Activated B cell treated with CpG ODN at 0.5 μM for 24 hours (primary cell): ENCODE measurements at regions of chr16 and their contacts with region 1.

Region 1: DNA sequence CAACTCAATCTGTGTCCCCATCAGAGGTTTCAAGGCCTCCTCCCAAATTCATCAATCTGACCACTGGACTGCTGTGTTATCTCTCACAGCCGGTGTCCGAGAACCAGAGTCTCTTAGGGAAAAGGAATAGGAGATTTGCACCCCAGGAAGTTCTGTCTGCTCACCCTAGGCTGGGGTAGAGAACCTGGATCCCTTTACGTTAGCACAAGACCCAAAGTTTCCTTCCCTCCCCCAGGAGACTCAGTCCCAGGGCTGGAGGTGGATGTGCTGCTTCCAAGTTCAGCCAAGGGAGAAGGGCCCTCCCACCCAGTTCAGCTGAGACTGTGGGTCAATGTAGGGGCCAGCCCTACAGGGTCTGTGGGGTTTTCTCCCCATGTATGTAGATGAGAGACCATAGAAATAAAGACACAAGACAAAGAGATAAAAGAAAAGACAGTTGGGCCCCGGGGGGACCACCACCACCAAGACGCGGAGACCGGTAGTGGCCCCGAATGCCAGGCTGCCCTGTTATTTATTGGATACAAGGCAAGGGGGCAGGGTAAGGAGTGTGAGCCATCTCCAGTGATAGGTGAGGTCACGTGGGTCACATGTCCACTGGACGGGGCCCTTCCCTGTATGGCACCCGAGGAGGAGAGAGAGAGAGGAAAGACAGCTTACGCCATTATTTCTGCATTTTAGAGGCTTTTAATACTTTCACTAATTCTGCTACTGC is 22.7 kb upstream of the OR1F1 start:
- DNase-seq: no peak
- ATAC-seq: no peak
- H3K4me3 Mint-ChIP-seq: peak overlapping the region; percentile 57
- H3K27ac Mint-ChIP-seq: peak overlapping the region; percentile 53
- H3K4me1 Mint-ChIP-seq: peaks cover 12% of the 10 kb centered on the region
- H3K27me3 Mint-ChIP-seq: peaks cover 10% of the 10 kb centered on the region
- CTCF ChIP-seq: no peak

Region 2: GRCh38 chr16:3003582-3004302 is 161.5 kb before region 1 on chr16:
- CTCF ChIA-PET with region 1: no interaction called
- POLR2A ChIA-PET with region 1: no interaction called
- intact Hi-C with region 1: loop called (anchors 1 kb)
- DNase-seq: peak; percentile 87
- ATAC-seq: peak; percentile 98
- H3K4me3 Mint-ChIP-seq: peak overlapping the region; percentile 67
- H3K27ac Mint-ChIP-seq: peak overlapping the region; percentile 53
- H3K4me1 Mint-ChIP-seq: peaks cover 28% of the 10 kb centered on the region
- H3K27me3 Mint-ChIP-seq: peaks cover 11% of the 10 kb centered on the region
- CTCF ChIP-seq: no peak

Region 3: DNA sequence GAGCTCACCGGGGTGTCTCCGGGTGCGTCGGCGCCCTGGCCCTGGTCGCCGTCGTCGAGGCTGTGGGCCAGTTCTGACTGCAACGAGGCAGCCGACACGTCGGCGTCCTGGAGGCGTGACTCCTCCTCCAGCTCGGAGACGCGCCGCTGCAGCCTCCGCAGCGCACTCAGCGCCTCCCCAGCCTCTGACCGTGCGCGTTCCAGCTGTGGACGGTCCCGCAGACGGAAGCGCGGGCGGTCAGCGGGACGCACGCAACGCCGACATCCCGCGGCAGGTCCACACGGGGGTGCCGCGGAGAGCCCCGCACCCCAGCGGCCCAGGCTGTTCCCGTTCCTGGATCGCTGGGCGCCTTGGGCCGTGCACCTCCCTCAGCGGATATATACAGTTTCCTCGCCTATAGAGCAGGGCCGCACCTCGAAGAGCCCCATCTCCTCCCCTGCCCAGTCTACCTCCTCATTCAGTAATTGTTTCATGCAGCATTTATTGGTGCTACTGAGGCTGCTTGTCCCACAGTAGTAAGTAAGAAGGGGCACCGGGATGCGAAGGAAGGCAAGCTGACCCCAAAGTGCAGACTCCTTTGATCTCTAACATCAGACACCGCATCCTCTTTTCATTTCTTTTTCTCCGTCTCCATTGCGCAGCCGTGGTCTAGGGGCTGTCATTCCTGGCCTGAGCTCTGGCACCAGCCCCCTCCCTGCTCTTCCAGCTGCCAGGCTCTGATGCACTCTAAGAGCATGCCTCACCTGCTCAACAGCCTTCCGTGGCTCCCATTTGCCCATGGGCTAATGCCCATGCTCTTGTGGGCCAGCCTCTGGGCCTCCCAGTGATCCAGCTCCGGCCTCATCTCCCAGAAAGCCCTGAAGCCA is 135.5 kb before region 1 on chr16:
- CTCF ChIA-PET with region 1: interaction called, 4 read pairs
- POLR2A ChIA-PET with region 1: interaction called, 3 read pairs
- intact Hi-C with region 1: loop called (anchors 1 kb)
- DNase-seq: no peak
- ATAC-seq: no peak
- H3K4me3 Mint-ChIP-seq: no peak overlapping the region
- H3K27ac Mint-ChIP-seq: no peak overlapping the region
- H3K4me1 Mint-ChIP-seq: peaks cover 13% of the 10 kb centered on the region
- H3K27me3 Mint-ChIP-seq: peaks cover 37% of the 10 kb centered on the region
- CTCF ChIP-seq: no peak

Region 4: GRCh38 chr16:3094289-3095027 is 70.8 kb before region 1 on chr16:
- CTCF ChIA-PET with region 1: interaction called, 3 read pairs
- POLR2A ChIA-PET with region 1: no interaction called
- intact Hi-C with region 1: loop called (anchors 1 kb)
- DNase-seq: no peak
- ATAC-seq: no peak
- H3K4me3 Mint-ChIP-seq: no peak overlapping the region
- H3K27ac Mint-ChIP-seq: peak overlapping the region; percentile 26
- H3K4me1 Mint-ChIP-seq: peaks cover 16% of the 10 kb centered on the region
- H3K27me3 Mint-ChIP-seq: no peaks in the 10 kb centered on the region
- CTCF ChIP-seq: no peak

Region 5: DNA sequence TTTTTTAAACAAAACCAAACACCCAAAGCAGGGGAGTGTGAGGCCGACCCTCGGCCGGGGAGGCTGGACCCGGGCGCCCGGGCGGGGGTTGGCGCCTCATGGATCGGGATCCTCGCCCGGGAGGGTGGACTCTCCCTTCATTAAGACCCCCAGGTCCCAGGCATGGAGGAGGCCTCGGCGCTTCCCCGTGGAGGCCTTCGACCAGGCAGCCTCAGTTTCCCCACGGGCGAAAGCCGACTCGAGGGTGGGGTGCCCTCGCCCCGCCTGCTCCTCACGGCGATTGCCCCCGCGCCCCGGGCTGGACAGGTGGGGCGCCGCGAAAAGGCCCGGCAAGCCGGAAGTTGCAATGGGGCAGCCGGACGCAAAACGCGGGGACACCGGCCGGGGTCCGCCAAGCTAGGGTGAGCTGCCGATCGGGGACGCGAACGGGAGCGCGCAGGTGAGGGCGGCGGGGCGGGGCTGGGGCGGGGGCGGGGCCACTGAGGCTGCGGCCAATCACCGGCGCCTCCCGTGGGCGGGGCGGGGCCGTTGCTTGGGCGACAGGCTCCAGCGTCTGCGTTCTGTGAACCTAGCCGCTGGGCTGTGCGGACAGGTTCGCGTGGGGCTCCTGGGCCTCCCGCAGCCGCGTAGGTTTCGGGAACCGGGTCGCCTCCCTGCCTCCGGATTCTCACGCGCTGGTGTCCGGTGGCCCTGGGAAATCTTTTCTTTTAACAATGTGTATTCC is 58.9 kb before region 1 on chr16:
- CTCF ChIA-PET with region 1: no interaction called
- POLR2A ChIA-PET with region 1: no interaction called
- intact Hi-C with region 1: no loop called
- DNase-seq: peak; percentile 84
- ATAC-seq: peak; percentile 96
- H3K4me3 Mint-ChIP-seq: peak overlapping the region; percentile 79
- H3K27ac Mint-ChIP-seq: peak overlapping the region; percentile 73
- H3K4me1 Mint-ChIP-seq: peaks cover 27% of the 10 kb centered on the region
- H3K27me3 Mint-ChIP-seq: peaks cover 1% of the 10 kb centered on the region
- CTCF ChIP-seq: no peak

Region 6: GRCh38 chr16:3305109-3306068 is 140.1 kb after region 1 on chr16 and contains the starts of genes TIGD7 and ZNF75A:
- CTCF ChIA-PET with region 1: no interaction called
- POLR2A ChIA-PET with region 1: no interaction called
- intact Hi-C with region 1: no loop called
- DNase-seq: peak; percentile 83
- ATAC-seq: peak; percentile 91
- H3K4me3 Mint-ChIP-seq: peak within 1 kb of the TSS; percentile 88
- H3K27ac Mint-ChIP-seq: peak within 1 kb of the TSS; percentile 88
- H3K4me1 Mint-ChIP-seq: peaks cover 26% of the 10 kb centered on the region
- H3K27me3 Mint-ChIP-seq: no peaks in the 10 kb centered on the region
- CTCF ChIP-seq: no peak
- total RNA-seq, gene TIGD7: 6.7 and 11.0 TPM in 2 replicates
- total RNA-seq, gene ZNF75A: 84.0 and 97.9 TPM in 2 replicates